Transverse colon (tissue), 4 donors: ENCODE measurements at regions of chr1 and their contacts with region 1.

Region 1: GRCh38 chr1:68321084-68321685 is 88.9 kb upstream of the WLS start:
- DNase-seq: peak; percentile 76
- H3K4me3 ChIP-seq: no peak overlapping the region
- H3K27ac ChIP-seq: peak overlapping the region in 3 of 4 donors; percentile 47 to 67 (median 64)
- H3K4me1 ChIP-seq: peaks cover 0 to 7% (median 2%) of the 10 kb centered on the region in 4 donors
- H3K27me3 ChIP-seq: no peaks in the 10 kb centered on the region
- CTCF ChIP-seq: peak; percentile 70 to 85 (median 77)
- EP300 ChIP-seq: no peak
- POLR2A ChIP-seq: no peak

Region 2: GRCh38 chr1:68162761-68163160 is 158.4 kb before region 1 on chr1:
- in situ Hi-C with region 1: no loop called
- intact Hi-C with region 1: no loop called
- DNase-seq: no peak
- H3K4me3 ChIP-seq: no peak overlapping the region
- H3K27ac ChIP-seq: no peak overlapping the region
- H3K4me1 ChIP-seq: peaks cover 0 to 5% (median 4%) of the 10 kb centered on the region in 4 donors
- H3K27me3 ChIP-seq: no peaks in the 10 kb centered on the region
- CTCF ChIP-seq: peak in 2 of 5 experiments; percentile 8 to 16
- EP300 ChIP-seq: no peak
- POLR2A ChIP-seq: no peak

Region 3: DNA sequence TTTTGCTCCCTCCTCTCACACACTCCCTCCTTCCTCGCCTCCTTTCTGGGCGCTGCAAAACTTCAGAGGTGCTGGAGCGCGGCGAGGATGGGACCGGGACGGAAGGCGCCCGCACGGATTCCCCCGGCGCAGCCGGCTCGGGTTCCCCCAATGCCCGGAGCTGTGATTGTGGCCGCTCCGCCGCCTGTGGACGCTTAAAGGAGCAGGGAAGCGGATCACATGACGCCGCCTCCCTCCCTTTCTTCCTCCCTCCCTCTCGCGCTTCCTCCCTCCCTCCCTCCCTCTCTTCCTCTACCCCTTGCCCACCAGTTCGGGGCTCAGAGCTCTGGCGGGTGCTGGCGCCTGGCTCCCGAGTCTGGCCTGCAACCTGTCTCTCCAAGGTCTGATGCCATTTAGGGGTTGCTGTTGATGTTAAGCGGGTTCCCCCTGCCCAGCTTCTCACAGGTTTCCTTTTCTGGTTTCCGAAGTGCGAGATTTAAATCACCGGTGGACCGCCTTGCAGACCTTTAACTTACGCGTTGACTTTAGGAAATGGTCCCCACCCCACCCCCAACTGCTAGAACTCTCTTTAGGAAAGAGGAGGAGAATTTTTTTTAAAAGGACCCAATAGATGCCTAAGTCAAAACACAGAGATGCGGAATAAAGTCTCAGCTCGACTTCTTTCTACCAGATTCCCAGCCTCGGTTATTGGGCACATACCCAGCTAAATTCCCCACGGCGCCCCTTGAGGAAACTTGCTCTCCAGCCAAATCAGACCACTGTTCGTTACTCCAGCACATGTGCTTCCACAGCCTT is 88.6 kb before region 1 on chr1 and contains the start of gene WLS:
- in situ Hi-C with region 1: no loop called
- intact Hi-C with region 1: loop called (anchors 10 kb)
- DNase-seq: peak; percentile 81
- H3K4me3 ChIP-seq: peak within 1 kb of the TSS; percentile 69 to 86 (median 72)
- H3K27ac ChIP-seq: peak within 1 kb of the TSS; percentile 83 to 95 (median 89)
- H3K4me1 ChIP-seq: peaks cover 0 to 39% (median 17%) of the 10 kb centered on the region in 4 donors
- H3K27me3 ChIP-seq: no peaks in the 10 kb centered on the region
- CTCF ChIP-seq: peak in 2 of 5 experiments; percentile 31 to 35
- EP300 ChIP-seq: no peak
- POLR2A ChIP-seq: peak; percentile 86
- total RNA-seq, gene WLS: 69.9 to 117 (median 98.7) TPM

Region 4: GRCh38 chr1:68307378-68307787 is 13.8 kb before region 1 on chr1:
- in situ Hi-C with region 1: no loop called
- intact Hi-C with region 1: no loop called
- DNase-seq: no peak
- H3K4me3 ChIP-seq: no peak overlapping the region
- H3K27ac ChIP-seq: peak overlapping the region in 2 of 4 donors; percentile 19 to 20
- H3K4me1 ChIP-seq: peaks cover 0 to 5% (median 0%) of the 10 kb centered on the region in 4 donors
- H3K27me3 ChIP-seq: no peaks in the 10 kb centered on the region
- CTCF ChIP-seq: no peak
- EP300 ChIP-seq: no peak
- POLR2A ChIP-seq: no peak